H1 (cell line): ENCODE measurements at regions of chr2 and their contacts with region 1.

Region 1: DNA sequence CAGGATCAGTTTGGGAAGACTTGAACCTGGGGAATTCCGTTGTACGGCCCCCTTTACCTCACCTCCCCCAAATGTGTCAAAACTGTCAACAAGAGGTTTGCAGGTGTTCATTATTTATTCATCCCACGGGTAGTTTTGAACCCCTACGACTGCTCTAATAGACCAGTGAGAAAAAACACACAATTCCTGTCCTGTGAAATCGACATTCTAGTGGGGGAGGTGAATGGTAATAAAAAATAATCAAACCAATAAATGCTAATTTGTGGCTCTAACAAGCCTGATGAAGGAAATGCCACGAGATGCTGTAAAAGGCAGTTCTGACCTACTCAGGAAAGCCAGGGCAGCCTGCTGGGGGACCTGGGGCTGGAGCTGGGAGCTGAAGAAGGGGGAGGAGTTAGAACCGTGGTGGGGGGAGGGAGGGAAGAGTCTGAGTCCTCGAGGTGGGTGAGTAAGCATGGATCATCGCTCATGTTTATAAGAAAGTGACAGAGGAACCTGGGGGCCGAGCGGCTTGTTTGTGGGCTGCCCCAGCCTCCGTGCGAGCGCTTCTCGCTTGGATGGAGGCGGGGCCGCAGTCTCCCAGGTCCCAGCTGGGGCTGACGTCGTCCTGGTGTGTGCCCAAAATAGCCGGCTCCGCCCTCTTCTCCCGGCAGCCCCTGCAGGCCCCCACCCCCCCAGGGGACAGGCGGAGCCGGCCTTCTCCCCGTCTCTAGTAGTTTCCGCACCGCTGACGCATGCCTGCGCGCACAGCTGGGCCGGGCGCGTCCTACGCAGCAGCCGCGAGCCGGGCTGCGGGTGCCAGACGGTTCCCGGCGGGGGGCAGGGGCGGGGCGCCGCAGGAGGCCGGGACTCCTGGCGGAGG is at the start of gene DNAJB2:
- DNase-seq: peak; percentile 89 to 94
- H3K4me3 ChIP-seq: peak within 1 kb of the TSS; percentile 45 to 75 (median 52)
- H3K27ac ChIP-seq: peak within 1 kb of the TSS; percentile 66; the same call in 1 of the 2 replicates
- H3K4me1 ChIP-seq: peaks cover 9 to 23% (median 14%) of the 10 kb centered on the region in 4 experiments
- H3K27me3 ChIP-seq: no peaks in the 10 kb centered on the region; a peak in 1 of 7 replicates
- CTCF ChIP-seq: no peak
- EP300 ChIP-seq: peak in 1 of 2 experiments; percentile 61; a peak in 1 of 3 replicates
- POLR2A ChIP-seq: 0 out of 3 replicates have a peak, but pooled peaks of 1 of the 2 experiments have one; percentile 31
- RAD21 ChIP-seq: no peak
- total RNA-seq, gene DNAJB2: 26.3 and 33.5 TPM in 2 replicates

Region 2: GRCh38 chr2:218471982-218472381 is 806.9 kb before region 1 on chr2:
- CTCF ChIA-PET with region 1: no interaction called
- POLR2A ChIA-PET with region 1: no interaction called
- DNase-seq: no peak
- H3K4me3 ChIP-seq: no peak overlapping the region
- H3K27ac ChIP-seq: no peak overlapping the region
- H3K4me1 ChIP-seq: no peaks in the 10 kb centered on the region
- H3K27me3 ChIP-seq: no peaks in the 10 kb centered on the region
- CTCF ChIP-seq: no peak
- EP300 ChIP-seq: no peak
- POLR2A ChIP-seq: no peak
- RAD21 ChIP-seq: no peak

Region 3: GRCh38 chr2:219229305-219230058 is 49.4 kb before region 1 on chr2 and contains the starts of genes ANKZF1 and ATG9A:
- CTCF ChIA-PET with region 1: interaction called, 12 read pairs
- POLR2A ChIA-PET with region 1: interaction called, 4 read pairs
- DNase-seq: peak; percentile 93 to 95
- H3K4me3 ChIP-seq: peak within 1 kb of the TSS; percentile 82 to 97 (median 92)
- H3K27ac ChIP-seq: peak within 1 kb of the TSS; percentile 71
- H3K4me1 ChIP-seq: peaks cover 0 to 6% (median 3%) of the 10 kb centered on the region in 4 experiments; a peak in 5 of 7 replicates
- H3K27me3 ChIP-seq: no peaks in the 10 kb centered on the region; a peak in 1 of 7 replicates
- CTCF ChIP-seq: no peak
- EP300 ChIP-seq: 0 out of 3 replicates have a peak, but pooled peaks of 1 of the 2 experiments have one; percentile 13
- POLR2A ChIP-seq: peak; percentile 79 to 90
- RAD21 ChIP-seq: peak in 1 of 2 experiments; percentile 6; a peak in 1 of 4 replicates
- total RNA-seq, gene ANKZF1: 44.4 and 50.1 TPM in 2 replicates
- total RNA-seq, gene ATG9A: 43.6 and 43.8 TPM in 2 replicates

Region 4: DNA sequence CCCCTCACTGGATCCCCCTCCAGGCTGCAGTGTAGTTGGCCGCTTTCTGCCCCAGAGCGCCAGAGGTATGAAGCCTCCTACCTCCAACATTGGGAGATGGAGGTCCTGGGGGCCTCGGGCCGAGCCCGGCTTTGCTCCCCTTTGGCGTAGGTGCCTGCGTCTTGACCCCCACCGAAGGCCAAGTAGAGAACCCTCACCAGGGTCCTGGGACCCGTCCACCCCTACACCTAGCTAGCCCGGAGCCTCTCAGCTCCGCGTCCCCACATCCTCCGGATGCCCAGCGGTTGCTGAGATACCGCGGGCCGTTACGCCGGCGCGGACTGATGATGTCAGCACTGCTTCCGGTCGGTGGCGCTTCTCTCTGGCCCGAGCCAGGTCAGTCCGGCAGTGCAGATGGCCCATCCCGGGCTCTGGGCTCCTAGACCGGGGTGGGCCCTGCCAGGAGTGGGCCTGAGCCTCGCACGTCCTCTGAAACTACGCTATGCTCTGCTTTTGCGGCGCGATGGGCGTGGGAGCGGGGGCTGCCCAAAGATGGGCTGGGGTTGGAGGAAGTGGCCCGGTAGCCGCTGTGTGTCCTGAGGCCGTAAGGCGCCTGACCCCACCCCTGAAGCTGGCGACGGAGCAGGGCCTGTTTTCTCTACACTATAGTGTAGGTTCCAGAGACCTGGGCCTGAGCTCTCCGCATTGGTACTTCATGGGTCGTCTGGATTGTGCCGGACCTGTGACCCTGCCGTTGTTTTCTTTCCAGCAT is 33.6 kb before region 1 on chr2 and contains the starts of genes GLB1L and STK16:
- CTCF ChIA-PET with region 1: interaction called, 34 read pairs
- POLR2A ChIA-PET with region 1: interaction called, 8 read pairs
- DNase-seq: peak in 1 of 2 experiments; percentile 98
- H3K4me3 ChIP-seq: peak within 1 kb of the TSS; percentile 74 to 81 (median 80)
- H3K27ac ChIP-seq: peak within 1 kb of the TSS; percentile 91
- H3K4me1 ChIP-seq: peaks cover 0 to 5% (median 3%) of the 10 kb centered on the region in 4 experiments; a peak in 3 of 7 replicates
- H3K27me3 ChIP-seq: no peaks in the 10 kb centered on the region
- CTCF ChIP-seq: no peak
- EP300 ChIP-seq: no peak
- POLR2A ChIP-seq: peak in 1 of 2 experiments; percentile 91; a peak in 2 of 3 replicates
- RAD21 ChIP-seq: no peak
- total RNA-seq, gene GLB1L: 3.2 and 3.7 TPM in 2 replicates
- total RNA-seq, gene STK16: 17.0 and 21.3 TPM in 2 replicates

Region 5: GRCh38 chr2:219253753-219254590 is 24.9 kb before region 1 on chr2 and contains the start of gene TUBA4A:
- CTCF ChIA-PET with region 1: interaction called, 40 read pairs
- POLR2A ChIA-PET with region 1: interaction called, 29 read pairs
- DNase-seq: peak in 1 of 2 experiments; percentile 89
- H3K4me3 ChIP-seq: peak within 1 kb of the TSS; percentile 46 to 64 (median 57)
- H3K27ac ChIP-seq: no peak within 1 kb of the TSS
- H3K4me1 ChIP-seq: peaks cover 5 to 12% (median 9%) of the 10 kb centered on the region in 4 experiments
- H3K27me3 ChIP-seq: peaks cover 16 to 43% (median 36%) of the 10 kb centered on the region in 4 experiments
- CTCF ChIP-seq: no peak
- EP300 ChIP-seq: no peak
- POLR2A ChIP-seq: peak in 1 of 2 experiments; percentile 66; a peak in 2 of 3 replicates
- RAD21 ChIP-seq: no peak
- total RNA-seq, gene TUBA4A: 59.5 and 67.3 TPM in 2 replicates

Region 6: GRCh38 chr2:219261024-219261855 is 17.6 kb before region 1 on chr2:
- CTCF ChIA-PET with region 1: interaction called, 40 read pairs
- POLR2A ChIA-PET with region 1: interaction called, 6 read pairs
- DNase-seq: no peak
- H3K4me3 ChIP-seq: no peak overlapping the region
- H3K27ac ChIP-seq: no peak overlapping the region
- H3K4me1 ChIP-seq: no peaks in the 10 kb centered on the region
- H3K27me3 ChIP-seq: peaks cover 0 to 7% (median 3%) of the 10 kb centered on the region in 4 experiments; a peak in 6 of 7 replicates
- CTCF ChIP-seq: no peak
- EP300 ChIP-seq: no peak
- POLR2A ChIP-seq: no peak
- RAD21 ChIP-seq: no peak

Region 7: DNA sequence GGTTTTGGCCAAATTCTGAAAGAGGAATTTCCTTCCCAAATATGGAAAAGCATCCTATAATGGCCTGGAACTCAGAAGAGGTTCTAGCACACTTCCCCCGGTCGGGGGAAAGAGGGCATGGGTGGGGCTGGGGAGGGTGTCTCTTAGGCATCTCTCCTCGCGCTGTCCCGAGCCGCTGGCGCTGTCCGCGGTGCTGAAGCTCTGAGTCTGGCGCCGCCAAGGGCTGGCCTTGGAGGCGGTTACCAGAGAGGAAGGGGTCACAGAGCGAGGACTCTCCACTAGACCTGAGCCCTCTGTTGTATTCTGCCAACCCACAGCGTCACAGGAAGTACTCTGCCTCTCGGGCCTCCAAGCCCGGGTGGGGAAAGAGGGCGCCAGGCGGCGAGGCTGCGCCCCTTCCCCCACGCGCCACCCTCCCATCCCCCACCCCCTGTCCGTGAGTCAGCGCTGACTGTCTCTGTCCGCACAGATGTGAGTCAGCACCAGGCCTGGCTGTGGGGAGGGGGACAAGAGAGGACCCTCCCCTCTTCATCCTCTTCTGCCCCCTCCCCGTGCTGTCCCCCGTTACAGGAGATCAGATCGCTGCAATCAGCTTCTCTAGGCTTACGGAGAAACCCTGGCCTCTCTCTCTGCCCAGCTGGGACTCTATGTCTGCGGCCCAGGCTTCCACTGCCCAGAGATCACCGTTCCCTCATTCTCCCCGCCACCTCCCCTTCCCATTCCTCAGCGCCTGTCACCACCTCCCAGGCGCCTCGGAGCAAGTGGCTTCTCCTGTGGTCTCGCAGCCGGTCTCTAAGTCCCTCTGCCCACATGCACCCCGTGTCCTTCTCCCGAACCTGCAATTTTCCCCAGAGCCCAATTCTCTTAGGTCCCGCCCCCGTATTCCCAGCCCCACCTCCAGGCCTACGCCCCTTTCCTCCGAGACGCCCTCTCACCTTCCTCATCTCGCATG is 29.5 kb after region 1 on chr2:
- CTCF ChIA-PET with region 1: interaction called, 6 read pairs
- POLR2A ChIA-PET with region 1: interaction called, 12 read pairs
- DNase-seq: peak in 1 of 2 experiments; percentile 97
- H3K4me3 ChIP-seq: peak overlapping the region; percentile 38 to 74 (median 44)
- H3K27ac ChIP-seq: no peak overlapping the region
- H3K4me1 ChIP-seq: peaks cover 0 to 9% (median 4%) of the 10 kb centered on the region in 4 experiments; a peak in 5 of 7 replicates
- H3K27me3 ChIP-seq: peaks cover 0 to 14% (median 12%) of the 10 kb centered on the region in 4 experiments; a peak in 4 of 7 replicates
- CTCF ChIP-seq: no peak
- EP300 ChIP-seq: no peak
- POLR2A ChIP-seq: no peak
- RAD21 ChIP-seq: no peak

Region 8: DNA sequence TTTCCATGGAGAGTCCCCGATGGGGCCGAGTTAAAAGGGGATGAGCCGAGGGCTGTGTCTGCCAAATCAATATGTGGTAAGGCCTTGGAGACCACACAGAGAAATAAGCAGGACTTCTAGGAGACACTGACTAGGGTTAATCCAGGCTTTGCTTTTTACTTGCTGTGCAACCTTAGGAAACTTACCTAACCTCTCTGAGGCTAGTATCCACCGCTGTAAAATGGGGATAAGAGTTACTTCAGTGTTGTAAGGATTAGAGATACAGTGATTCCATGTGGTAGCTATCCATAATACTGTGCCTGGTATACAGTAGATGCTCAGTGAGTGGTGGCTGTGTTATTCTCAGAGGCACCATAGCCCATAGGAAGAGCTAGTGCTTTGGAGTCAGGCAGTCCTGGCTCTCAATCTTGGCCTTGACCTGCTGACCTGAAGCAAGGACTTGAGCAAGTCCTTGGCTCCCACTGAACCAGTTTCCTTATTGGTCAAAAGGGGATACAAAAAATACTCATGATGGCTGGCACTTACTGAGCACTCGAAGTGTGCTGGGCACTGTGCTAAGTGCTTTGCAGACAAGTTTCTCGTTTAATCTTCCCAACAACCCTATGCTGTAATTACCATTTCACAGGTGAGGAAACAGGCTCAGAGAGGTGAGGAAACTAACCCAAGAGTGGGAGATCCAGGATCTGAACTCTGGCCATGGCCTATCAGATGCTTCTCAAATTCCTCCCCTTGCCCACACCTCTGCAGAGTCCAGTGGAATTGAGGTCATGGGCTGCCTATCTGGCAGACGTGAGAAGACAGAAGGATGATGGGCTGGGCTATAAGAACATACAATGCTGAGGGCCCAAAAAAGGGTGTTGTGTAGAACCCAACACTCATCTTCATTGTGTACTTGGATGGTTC is 127.3 kb after region 1 on chr2:
- CTCF ChIA-PET with region 1: no interaction called
- POLR2A ChIA-PET with region 1: no interaction called
- DNase-seq: no peak
- H3K4me3 ChIP-seq: no peak overlapping the region
- H3K27ac ChIP-seq: no peak overlapping the region
- H3K4me1 ChIP-seq: peaks cover 0 to 16% (median 6%) of the 10 kb centered on the region in 4 experiments; a peak in 6 of 7 replicates
- H3K27me3 ChIP-seq: peaks cover 0 to 2% (median 0%) of the 10 kb centered on the region in 4 experiments; a peak in 1 of 7 replicates
- CTCF ChIP-seq: no peak
- EP300 ChIP-seq: no peak
- POLR2A ChIP-seq: no peak
- RAD21 ChIP-seq: no peak

Region 9: GRCh38 chr2:219452838-219453317 is 174.0 kb after region 1 on chr2:
- CTCF ChIA-PET with region 1: no interaction called
- POLR2A ChIA-PET with region 1: no interaction called
- DNase-seq: no peak
- H3K4me3 ChIP-seq: no peak overlapping the region
- H3K27ac ChIP-seq: no peak overlapping the region
- H3K4me1 ChIP-seq: peaks cover 0 to 19% (median 3%) of the 10 kb centered on the region in 4 experiments; a peak in 5 of 7 replicates
- H3K27me3 ChIP-seq: peaks cover 0 to 13% (median 9%) of the 10 kb centered on the region in 4 experiments; a peak in 5 of 7 replicates
- CTCF ChIP-seq: no peak
- EP300 ChIP-seq: no peak
- POLR2A ChIP-seq: no peak
- RAD21 ChIP-seq: no peak